ENCODE measurements at regions of chr2 and their contacts with region 1.

Region 1: DNA sequence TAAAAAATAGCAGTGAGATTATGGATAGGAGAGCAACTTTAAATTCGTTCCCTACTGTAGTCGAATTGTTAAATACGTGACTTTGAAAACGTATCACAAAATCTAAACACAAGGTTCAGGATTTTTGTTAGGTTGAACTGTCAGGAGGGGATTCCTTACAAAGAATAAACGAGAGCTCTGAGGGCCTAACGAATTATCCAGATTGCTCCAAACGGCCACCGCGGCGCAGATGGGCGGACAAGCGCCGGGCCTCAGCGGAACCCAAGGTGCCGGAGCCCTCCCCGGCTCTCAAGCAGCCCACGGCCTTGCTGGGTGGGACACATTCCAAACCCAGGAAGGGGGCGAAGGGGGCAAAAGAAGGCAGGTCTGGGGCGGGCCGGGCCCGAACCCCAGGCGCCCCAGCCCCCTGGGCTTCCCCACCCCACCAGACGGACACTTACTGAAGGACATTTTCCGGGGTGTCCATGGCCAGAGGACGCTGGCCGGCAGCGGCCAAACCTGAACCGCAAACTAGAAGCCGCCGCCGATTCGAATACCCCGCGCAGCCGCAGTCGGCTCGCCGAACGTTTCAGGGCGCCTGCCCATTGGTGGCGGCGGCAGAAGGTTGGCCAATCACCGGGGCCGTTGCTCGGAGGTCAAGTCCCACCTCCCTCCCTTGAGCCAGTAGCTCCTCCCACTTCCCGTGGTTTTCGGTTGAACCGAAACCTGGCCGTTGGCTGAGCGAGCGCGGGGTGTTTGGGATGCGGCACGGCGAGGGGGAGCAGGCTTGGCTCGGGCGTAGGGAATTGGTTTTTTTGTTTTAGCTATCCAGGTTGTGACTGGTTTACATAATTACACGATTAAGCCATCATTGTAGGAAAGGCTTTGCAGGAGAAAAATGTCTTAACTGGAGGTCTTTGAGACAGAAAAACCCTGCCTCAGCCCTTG is at the start of gene BUB1:
- DNase-seq: peak; percentile 90 to 98 (median 94)
- ATAC-seq: peak; percentile 98
- H3K4me3 ChIP-seq: peak within 1 kb of the TSS; percentile 93
- H3K4me3 Mint-ChIP-seq: peak within 1 kb of the TSS; percentile 98
- H3K27ac ChIP-seq: peak within 1 kb of the TSS; percentile 55 to 63
- H3K27ac Mint-ChIP-seq: peak within 1 kb of the TSS; percentile 89
- H3K4me1 ChIP-seq: peaks cover 27% of the 10 kb centered on the region
- H3K4me1 Mint-ChIP-seq: peaks cover 21% of the 10 kb centered on the region
- H3K27me3 ChIP-seq: no peaks in the 10 kb centered on the region
- H3K27me3 Mint-ChIP-seq: no peaks in the 10 kb centered on the region
- CTCF ChIP-seq: no peak
- total RNA-seq, gene BUB1: 1.6 to 3.5 TPM

Region 2: DNA sequence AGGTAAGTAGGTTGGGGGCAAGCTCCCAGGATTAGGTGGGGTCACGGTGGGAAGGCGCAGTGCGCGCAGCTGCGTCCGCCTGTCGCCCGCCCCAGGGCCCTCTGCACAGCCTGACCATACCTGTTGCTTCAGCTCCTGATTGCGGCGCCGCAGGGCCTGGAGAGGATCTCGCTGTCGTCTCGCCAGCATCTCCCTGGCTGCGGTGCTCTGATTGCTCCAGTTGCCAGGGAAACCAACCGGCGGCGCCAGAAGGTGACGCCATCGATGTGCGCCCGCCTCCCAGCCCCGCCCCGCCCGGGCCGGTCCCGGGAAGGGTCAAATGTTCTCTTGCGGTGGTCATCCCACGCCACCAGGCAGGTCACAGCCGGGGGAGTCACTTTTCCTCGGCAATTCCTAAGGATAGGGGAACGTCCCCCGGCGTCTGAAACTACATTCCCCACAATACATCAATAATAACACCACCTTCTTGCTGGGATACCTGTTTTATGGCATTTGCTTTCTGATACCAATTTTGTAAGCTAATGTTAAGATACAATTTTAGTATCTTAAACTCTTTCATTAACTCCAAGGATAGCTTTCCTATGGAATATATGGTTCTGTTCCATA is 472.9 kb before region 1 on chr2 and contains the start of gene NPHP1:
- CTCF ChIA-PET with region 1: no interaction called
- POLR2A ChIA-PET with region 1: no interaction called
- intact Hi-C with region 1: loop called in 1 of 2 experiments (anchors 5 kb)
- DNase-seq: peak; percentile 62 to 92 (median 78)
- ATAC-seq: peak; percentile 93
- H3K4me3 ChIP-seq: peak within 1 kb of the TSS; percentile 69
- H3K4me3 Mint-ChIP-seq: peak within 1 kb of the TSS; percentile 93
- H3K27ac ChIP-seq: peak within 1 kb of the TSS in 1 of 2 donors; percentile 31
- H3K27ac Mint-ChIP-seq: peak within 1 kb of the TSS; percentile 78
- H3K4me1 ChIP-seq: peaks cover 5% of the 10 kb centered on the region
- H3K4me1 Mint-ChIP-seq: peaks cover 34% of the 10 kb centered on the region
- H3K27me3 ChIP-seq: no peaks in the 10 kb centered on the region
- H3K27me3 Mint-ChIP-seq: no peaks in the 10 kb centered on the region
- CTCF ChIP-seq: no peak
- total RNA-seq, gene NPHP1: 0.33 to 0.98 TPM

Region 3: DNA sequence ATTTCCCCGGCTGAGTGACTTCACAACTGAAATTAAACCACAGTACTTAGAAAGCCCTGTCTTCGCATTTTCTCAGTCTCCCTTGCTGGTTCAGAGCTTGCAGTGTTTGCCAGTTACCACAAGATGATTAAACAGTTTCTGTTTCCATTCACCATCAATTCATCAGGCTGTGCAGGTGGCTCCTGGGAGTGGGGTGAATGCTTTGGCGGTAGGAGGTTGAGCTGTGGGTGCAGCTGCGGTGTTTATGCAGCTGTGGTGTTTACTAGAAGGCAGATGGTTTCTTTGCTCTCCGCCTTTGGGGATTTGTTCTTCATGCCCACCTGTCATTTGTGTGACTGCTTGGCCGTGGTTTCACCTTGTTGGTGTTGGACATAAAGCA is 70.7 kb after region 1 on chr2:
- CTCF ChIA-PET with region 1: no interaction called
- POLR2A ChIA-PET with region 1: interaction called, 7 read pairs
- intact Hi-C with region 1: loop called in 1 of 2 experiments (anchors 5 kb)
- DNase-seq: peak in 13 of 14 experiments; percentile 5 to 67 (median 23)
- ATAC-seq: peak; percentile 87
- H3K4me3 ChIP-seq: peak overlapping the region; percentile 21
- H3K4me3 Mint-ChIP-seq: peak overlapping the region; percentile 43
- H3K27ac ChIP-seq: no peak overlapping the region
- H3K27ac Mint-ChIP-seq: peak overlapping the region; percentile 25
- H3K4me1 ChIP-seq: peaks cover 20% of the 10 kb centered on the region
- H3K4me1 Mint-ChIP-seq: peaks cover 15% of the 10 kb centered on the region
- H3K27me3 ChIP-seq: peaks cover 0 to 3% of the 10 kb centered on the region in 2 experiments
- H3K27me3 Mint-ChIP-seq: peaks cover 32% of the 10 kb centered on the region
- CTCF ChIP-seq: no peak

Region 4: DNA sequence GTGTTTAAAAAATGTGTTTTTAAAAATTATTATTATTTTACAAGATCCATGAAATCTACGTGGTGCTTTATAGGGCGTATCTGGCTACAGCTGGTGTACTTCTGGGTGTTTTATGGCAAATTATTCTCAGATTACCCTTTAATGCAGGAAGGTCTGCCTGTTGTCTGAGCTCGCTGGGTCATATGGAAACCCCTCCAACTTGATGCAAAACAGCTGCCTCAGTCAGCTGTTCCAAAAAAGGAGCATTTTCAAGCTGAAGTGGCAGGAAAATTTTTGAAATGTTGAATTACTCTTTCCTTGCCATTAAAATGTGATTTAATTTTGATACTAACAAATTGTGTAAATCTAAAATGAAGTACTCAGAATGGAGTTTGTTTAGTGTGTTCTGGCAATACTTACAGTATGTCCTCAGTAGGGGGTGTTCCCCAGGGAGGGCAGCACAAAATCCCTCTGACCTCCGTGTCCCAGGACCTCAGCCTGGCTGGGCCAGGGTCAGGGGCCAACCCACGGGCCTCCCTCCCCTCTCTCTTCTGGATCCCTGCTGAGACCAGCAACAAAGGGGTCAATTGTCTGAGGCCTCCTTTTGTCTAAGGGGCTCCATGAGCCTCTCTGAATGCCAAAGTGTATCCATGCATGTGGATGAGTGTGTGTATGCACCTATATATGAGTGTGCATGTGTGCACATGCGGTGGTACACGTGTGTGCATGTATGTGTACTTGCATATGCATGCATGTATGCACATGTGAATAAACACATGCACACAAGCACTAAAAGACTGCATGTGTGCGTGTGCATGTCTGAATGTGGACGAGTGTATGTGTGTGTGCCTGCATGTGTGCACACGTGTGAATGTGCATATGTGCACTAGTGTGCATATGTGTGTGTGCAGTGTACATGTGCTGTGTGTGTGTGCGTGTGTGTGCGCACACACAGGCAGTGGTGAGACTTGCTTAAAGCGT is 159.9 kb after region 1 on chr2:
- CTCF ChIA-PET with region 1: no interaction called
- POLR2A ChIA-PET with region 1: no interaction called
- intact Hi-C with region 1: no loop called
- DNase-seq: no peak
- ATAC-seq: no peak
- H3K4me3 ChIP-seq: no peak overlapping the region
- H3K4me3 Mint-ChIP-seq: no peak overlapping the region
- H3K27ac ChIP-seq: no peak overlapping the region
- H3K27ac Mint-ChIP-seq: no peak overlapping the region
- H3K4me1 ChIP-seq: no peaks in the 10 kb centered on the region
- H3K4me1 Mint-ChIP-seq: peaks cover 6% of the 10 kb centered on the region
- H3K27me3 ChIP-seq: no peaks in the 10 kb centered on the region
- H3K27me3 Mint-ChIP-seq: no peaks in the 10 kb centered on the region
- CTCF ChIP-seq: no peak

Region 5: GRCh38 chr2:110979471-110980338 is 301.9 kb after region 1 on chr2:
- CTCF ChIA-PET with region 1: no interaction called
- POLR2A ChIA-PET with region 1: no interaction called
- intact Hi-C with region 1: no loop called
- DNase-seq: no peak
- ATAC-seq: no peak
- H3K4me3 ChIP-seq: no peak overlapping the region
- H3K4me3 Mint-ChIP-seq: no peak overlapping the region
- H3K27ac ChIP-seq: no peak overlapping the region
- H3K27ac Mint-ChIP-seq: no peak overlapping the region
- H3K4me1 ChIP-seq: no peaks in the 10 kb centered on the region
- H3K4me1 Mint-ChIP-seq: no peaks in the 10 kb centered on the region
- H3K27me3 ChIP-seq: no peaks in the 10 kb centered on the region
- H3K27me3 Mint-ChIP-seq: no peaks in the 10 kb centered on the region
- CTCF ChIP-seq: no peak

Region 6: GRCh38 chr2:110993557-110994231 is 315.9 kb after region 1 on chr2:
- CTCF ChIA-PET with region 1: no interaction called
- POLR2A ChIA-PET with region 1: no interaction called
- intact Hi-C with region 1: no loop called
- DNase-seq: peak in 4 of 14 experiments; percentile 25 to 64 (median 44)
- ATAC-seq: no peak
- H3K4me3 ChIP-seq: no peak overlapping the region
- H3K4me3 Mint-ChIP-seq: peak overlapping the region; percentile 8
- H3K27ac ChIP-seq: no peak overlapping the region
- H3K27ac Mint-ChIP-seq: no peak overlapping the region
- H3K4me1 ChIP-seq: peaks cover 14% of the 10 kb centered on the region
- H3K4me1 Mint-ChIP-seq: peaks cover 19% of the 10 kb centered on the region
- H3K27me3 ChIP-seq: no peaks in the 10 kb centered on the region
- H3K27me3 Mint-ChIP-seq: peaks cover 18% of the 10 kb centered on the region
- CTCF ChIP-seq: no peak